ENCODE measurements at regions of chr6 and their contacts with region 1.

Region 1: GRCh38 chr6:5278047-5278446 is 16.7 kb downstream of the FARS2 start:
- DNase-seq: no peak
- ATAC-seq: no peak
- H3K4me3 ChIP-seq: no peak overlapping the region
- H3K27ac ChIP-seq: no peak overlapping the region
- H3K4me1 ChIP-seq: peaks cover 5 to 12% of the 10 kb centered on the region in 2 experiments; a peak in 4 of 5 replicates
- H3K27me3 ChIP-seq: no peaks in the 10 kb centered on the region
- CTCF ChIP-seq: no peak
- EP300 ChIP-seq: no peak
- POLR2A ChIP-seq: no peak
- RAD21 ChIP-seq: no peak

Region 2: DNA sequence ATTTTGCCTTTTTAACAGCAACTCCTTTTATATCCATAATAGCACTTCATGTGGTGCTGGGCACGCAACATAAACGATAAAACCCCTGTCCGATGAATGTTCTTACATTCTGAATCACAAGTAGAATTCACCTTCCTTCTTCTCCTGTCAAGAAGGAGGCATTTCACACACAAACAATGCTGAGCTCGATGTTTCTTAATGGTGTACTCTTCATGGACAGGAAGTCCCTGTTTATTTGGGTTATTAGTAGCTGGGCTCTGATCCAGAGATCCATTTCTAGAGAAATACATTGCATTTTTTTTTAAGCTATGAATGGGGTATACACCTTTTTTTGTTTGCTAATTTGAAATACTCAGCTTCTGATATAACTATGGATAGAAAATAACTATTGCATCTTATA is 110.5 kb before region 1 on chr6:
- CTCF ChIA-PET with region 1: no interaction called
- POLR2A ChIA-PET with region 1: no interaction called
- in situ Hi-C with region 1: no loop called
- intact Hi-C with region 1: no loop called
- DNase-seq: no peak
- ATAC-seq: no peak
- H3K4me3 ChIP-seq: no peak overlapping the region
- H3K27ac ChIP-seq: no peak overlapping the region
- H3K4me1 ChIP-seq: no peaks in the 10 kb centered on the region
- H3K27me3 ChIP-seq: no peaks in the 10 kb centered on the region
- CTCF ChIP-seq: no peak
- EP300 ChIP-seq: no peak
- POLR2A ChIP-seq: no peak
- RAD21 ChIP-seq: no peak

Region 3: DNA sequence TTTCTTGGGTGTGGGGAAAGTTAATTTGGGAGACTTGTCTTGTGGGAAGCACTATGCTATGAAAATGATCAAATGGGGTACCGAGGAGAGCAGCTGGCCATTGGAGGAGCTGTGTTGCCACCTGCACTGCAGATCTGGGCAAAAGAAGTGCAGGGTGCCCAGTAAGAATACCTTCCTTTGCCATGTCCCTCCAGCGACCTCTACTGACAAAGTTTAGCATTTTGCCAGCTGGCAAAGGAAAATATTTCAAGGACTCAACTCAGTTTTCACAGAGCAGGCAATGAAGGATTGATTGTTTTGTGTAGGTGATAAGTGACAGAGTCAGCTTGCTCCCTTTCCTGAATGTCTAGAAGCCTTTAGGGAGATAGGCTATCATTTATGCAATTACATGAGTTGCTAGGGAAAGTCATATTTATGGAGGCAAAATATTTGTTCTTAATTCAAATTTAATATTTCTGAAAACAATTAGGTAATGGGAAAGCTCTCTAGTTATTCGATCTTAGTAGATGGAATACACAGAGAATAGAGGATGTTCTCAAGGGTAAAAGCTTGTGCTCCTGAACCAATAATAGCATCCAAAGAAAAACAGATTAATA is 101.7 kb after region 1 on chr6:
- CTCF ChIA-PET with region 1: no interaction called
- POLR2A ChIA-PET with region 1: no interaction called
- in situ Hi-C with region 1: no loop called
- intact Hi-C with region 1: loop called (anchors 5 kb)
- DNase-seq: peak; percentile 16 to 64 (median 32)
- ATAC-seq: peak; percentile 82
- H3K4me3 ChIP-seq: no peak overlapping the region
- H3K27ac ChIP-seq: no peak overlapping the region
- H3K4me1 ChIP-seq: no peaks in the 10 kb centered on the region; a peak in 1 of 5 replicates
- H3K27me3 ChIP-seq: no peaks in the 10 kb centered on the region
- CTCF ChIP-seq: peak; percentile 74 to 89 (median 83)
- EP300 ChIP-seq: no peak
- POLR2A ChIP-seq: no peak
- RAD21 ChIP-seq: peak; percentile 52 to 87

Measured in K562 (cell line).